ENCODE measurements at regions of chr3 and their contacts with region 1.

Region 1: GRCh38 chr3:16247276-16248061 is 17.3 kb downstream of the DPH3 start:
- DNase-seq: peak; percentile 77
- ATAC-seq: peak; percentile 56

Region 2: DNA sequence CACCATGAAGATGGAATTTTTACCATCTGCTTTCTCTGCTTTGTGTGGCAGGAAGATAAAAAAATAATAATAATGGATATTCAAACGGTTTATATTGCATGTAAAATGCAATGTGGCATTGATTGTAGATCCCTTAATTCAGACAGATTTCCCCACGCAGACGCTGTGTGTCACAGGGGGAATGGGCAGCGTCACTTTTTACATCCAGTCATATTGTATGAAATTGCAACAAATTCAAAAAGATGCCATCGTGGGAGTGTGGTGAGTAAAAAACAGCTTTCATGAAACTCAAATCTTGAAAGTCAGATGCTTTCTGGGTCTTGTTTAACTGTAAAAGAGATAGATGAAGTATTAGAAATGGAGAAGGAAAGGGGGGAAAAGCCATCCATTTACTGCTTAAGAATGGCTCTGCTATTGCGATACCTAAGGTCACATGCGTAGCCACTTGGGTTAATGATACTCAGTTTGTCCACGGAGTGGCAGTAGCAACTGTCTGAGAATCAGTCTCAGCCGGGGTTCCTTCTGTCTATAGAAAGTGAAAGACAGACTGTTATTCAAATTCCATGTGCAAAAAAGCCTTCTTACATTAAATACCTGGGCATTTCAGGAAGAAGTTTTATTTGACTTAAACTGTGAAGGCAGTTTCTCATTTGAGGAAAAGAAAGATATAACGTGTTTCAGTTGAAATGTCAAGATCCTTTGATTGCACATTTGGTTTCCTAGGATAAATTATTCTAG is 617.4 kb before region 1 on chr3:
- intact Hi-C with region 1: loop called (anchors 10 kb)
- DNase-seq: no peak
- ATAC-seq: peak; percentile 94

Region 3: GRCh38 chr3:15820911-15821310 is 426.6 kb before region 1 on chr3:
- intact Hi-C with region 1: loop called (anchors 5 kb)
- DNase-seq: no peak
- ATAC-seq: no peak

Region 4: GRCh38 chr3:16482770-16483531 is 235.5 kb after region 1 on chr3:
- intact Hi-C with region 1: no loop called
- DNase-seq: no peak
- ATAC-seq: peak; percentile 33

Region 5: DNA sequence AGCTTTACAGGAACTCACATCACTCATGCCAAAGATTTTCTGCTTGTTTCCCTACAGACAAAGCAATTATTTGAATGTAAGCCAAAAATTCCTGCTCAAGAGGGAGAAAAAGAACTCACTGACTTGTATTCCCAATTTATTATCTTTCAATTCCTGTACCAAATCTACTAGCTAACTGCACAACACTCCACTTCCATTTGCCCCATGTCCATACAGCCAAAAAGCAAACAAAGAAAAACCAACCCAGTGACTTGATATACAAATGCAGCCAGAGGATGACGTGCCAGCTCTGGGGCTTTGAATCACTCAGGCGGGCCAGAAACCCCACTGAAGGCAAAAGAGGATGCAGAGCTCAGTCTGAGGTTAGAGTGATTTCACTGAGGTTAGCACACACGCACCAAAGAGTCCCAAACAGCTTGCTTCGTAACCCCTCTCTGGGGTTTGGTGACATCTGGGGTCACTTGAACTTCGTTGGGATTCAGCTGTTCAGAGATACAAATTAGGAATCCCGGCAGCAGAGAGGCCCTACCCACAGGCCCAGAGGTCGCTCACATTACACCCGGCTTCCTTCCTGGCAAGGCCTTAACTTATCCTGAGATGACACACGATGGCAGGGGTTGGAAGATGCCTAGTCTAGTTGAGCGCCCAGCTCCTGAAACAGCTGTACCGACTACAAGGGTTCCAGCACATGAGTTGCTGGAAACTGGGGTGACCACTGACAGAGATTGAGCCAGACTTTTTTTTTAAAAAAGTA is 264.4 kb after region 1 on chr3:
- intact Hi-C with region 1: no loop called
- DNase-seq: peak; percentile 59
- ATAC-seq: peak; percentile 56

Measured in left ventricle myocardium superior (tissue), 1 donor.